ENCODE measurements at regions of chr17 and their contacts with region 1.

Region 1: DNA sequence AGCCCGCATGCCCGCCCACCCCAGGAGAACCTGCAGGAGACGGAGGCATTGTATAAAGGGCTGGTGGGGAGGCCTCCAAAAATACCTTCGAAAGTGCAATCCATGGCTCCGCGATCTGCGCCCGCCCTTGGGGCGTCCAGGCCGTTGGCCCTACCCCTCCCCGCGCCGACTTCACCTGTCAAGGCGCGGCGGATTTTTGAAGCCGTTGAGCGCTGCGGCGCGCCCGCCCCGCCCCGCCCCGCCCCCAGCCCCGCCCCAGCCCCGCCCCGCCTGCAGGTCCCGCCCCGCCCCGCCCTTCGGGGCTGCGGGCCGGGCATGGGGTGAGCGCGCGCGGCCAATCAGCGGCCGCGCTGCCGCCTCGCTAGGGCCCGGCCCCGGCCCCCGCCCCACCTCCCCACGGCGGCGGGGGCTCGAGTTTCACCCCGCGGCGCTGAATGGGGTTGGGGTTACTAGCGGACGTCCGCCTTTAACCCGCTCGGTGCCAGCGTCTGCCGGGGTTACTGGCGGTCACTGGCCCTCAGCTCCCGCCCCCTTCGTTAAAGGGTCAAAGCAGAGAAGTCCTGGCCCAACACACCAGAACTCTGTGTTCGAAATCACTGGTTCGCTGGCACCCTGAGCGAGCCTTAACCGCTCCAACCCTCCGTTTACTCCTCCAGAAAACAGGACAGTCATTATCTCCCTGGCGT is 13.2 kb downstream of the SREBF1 start:
- DNase-seq: peak; percentile 82
- H3K4me3 Mint-ChIP-seq: peak overlapping the region; percentile 80
- H3K27ac Mint-ChIP-seq: peak overlapping the region; percentile 91
- H3K4me1 Mint-ChIP-seq: peaks cover 92% of the 10 kb centered on the region
- H3K27me3 Mint-ChIP-seq: no peaks in the 10 kb centered on the region

Region 2: GRCh38 chr17:17783116-17783824 is 40.3 kb before region 1 on chr17:
- intact Hi-C with region 1: loop called (anchors 5 kb)
- DNase-seq: peak; percentile 47
- H3K4me3 Mint-ChIP-seq: peak overlapping the region; percentile 76
- H3K27ac Mint-ChIP-seq: no peak overlapping the region
- H3K4me1 Mint-ChIP-seq: no peaks in the 10 kb centered on the region
- H3K27me3 Mint-ChIP-seq: peaks cover 9% of the 10 kb centered on the region

Region 3: GRCh38 chr17:17792551-17793377 is 30.8 kb before region 1 on chr17:
- intact Hi-C with region 1: loop called (anchors 2 kb)
- DNase-seq: peak; percentile 68
- H3K4me3 Mint-ChIP-seq: peak overlapping the region; percentile 42
- H3K27ac Mint-ChIP-seq: peak overlapping the region; percentile 84
- H3K4me1 Mint-ChIP-seq: peaks cover 26% of the 10 kb centered on the region
- H3K27me3 Mint-ChIP-seq: no peaks in the 10 kb centered on the region

Region 4: DNA sequence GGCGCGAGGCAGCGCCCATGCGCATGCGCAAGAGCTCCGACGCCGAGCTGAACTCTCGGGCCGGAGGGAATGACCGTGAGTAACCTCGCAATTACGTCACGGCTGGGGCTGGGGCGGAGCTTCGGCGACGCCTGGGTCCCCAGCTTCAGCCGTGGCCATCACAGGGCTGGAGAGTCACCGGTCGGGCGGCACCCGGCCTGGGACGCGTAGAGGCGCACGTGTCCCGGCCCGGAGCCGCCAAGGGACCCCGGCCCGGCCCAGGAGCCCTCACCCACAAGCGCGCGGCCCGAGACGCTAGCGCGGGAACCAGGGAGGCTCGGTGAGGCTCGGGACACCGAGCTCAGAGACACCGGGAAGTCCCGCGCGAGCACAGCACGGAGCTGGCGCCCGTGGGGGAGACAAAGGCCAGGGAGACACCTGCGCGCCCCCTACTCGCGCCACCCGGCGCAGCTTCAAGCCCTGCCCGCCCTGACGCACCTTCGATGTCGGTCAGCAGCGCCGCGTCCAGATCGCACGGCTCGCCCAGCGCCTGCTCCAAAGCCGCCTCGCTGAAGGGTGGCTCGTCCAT is 12.8 kb after region 1 on chr17:
- intact Hi-C with region 1: loop called (anchors 1 kb)
- DNase-seq: peak; percentile 95
- H3K4me3 Mint-ChIP-seq: peak overlapping the region; percentile 93
- H3K27ac Mint-ChIP-seq: peak overlapping the region; percentile 86
- H3K4me1 Mint-ChIP-seq: peaks cover 69% of the 10 kb centered on the region
- H3K27me3 Mint-ChIP-seq: no peaks in the 10 kb centered on the region

Measured in activated T-helper 1 cell treated with anti-CD3 and anti-CD28 coated beads, Interleukin-12 subunit alpha, Interleukin-12 subunit beta, Interleukin-2, Interleukin-4 antibody, amounts not matched to agents 30 ng/mL and 10 ng/mL and 1 ng/mL, durations not matched to agents 14 hours and 24 hours and 36 hours (primary cell).